Caco-2 (cell line): ENCODE measurements at regions of chr11 and their contacts with region 1.

Region 1: DNA sequence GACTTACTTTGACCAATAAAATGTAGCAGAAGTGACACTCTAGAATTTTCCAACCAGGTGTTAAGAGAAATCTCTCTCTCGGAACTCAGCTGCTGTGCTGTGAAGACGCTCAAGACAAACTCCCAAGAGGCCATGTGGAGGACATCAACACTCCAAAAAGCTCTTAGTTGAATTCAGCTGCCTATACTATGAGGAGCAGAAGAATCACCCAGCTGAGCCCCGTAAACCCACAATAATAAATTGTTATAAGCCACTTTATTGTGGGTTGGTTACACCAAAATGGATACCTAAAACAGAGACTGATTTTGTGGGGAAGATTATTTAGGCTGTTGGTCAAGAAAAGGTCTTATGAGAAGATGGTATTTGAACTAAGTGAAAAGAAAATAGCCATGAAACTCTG is 44.1 kb upstream of the FSHB start:
- DNase-seq: no peak
- H3K4me3 ChIP-seq: no peak overlapping the region
- H3K4me3 Mint-ChIP-seq: no peak overlapping the region
- H3K27ac Mint-ChIP-seq: no peak overlapping the region
- H3K4me1 ChIP-seq: peaks cover 9% of the 10 kb centered on the region; the same call in 1 of the 2 replicates
- H3K4me1 Mint-ChIP-seq: no peaks in the 10 kb centered on the region
- H3K27me3 ChIP-seq: no peaks in the 10 kb centered on the region
- H3K27me3 Mint-ChIP-seq: no peaks in the 10 kb centered on the region
- CTCF ChIP-seq: no peak

Region 2: DNA sequence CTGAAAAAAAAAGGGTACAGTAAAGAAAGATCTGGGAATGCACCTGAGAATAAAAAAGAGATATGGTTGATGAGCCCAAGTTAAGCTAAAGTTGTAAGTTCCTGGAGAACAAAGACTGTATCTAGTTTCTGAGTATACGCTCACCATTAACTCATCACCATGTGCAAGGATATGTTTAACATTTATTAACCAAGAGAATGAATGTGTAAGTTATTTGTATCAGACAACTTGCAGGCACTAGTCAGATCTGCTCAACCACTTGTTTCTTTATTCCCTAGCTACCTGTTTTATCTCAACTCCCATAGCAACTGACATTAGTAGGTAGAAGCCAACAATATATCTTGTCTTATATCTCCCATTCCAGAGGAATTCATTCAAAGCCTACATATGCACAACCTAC is 95.0 kb before region 1 on chr11:
- CTCF ChIA-PET with region 1: no interaction called
- POLR2A ChIA-PET with region 1: no interaction called
- intact Hi-C with region 1: no loop called
- DNase-seq: no peak
- H3K4me3 ChIP-seq: no peak overlapping the region
- H3K4me3 Mint-ChIP-seq: no peak overlapping the region
- H3K27ac Mint-ChIP-seq: no peak overlapping the region
- H3K4me1 ChIP-seq: no peaks in the 10 kb centered on the region
- H3K4me1 Mint-ChIP-seq: no peaks in the 10 kb centered on the region
- H3K27me3 ChIP-seq: no peaks in the 10 kb centered on the region
- H3K27me3 Mint-ChIP-seq: peaks cover 4% of the 10 kb centered on the region
- CTCF ChIP-seq: no peak

Region 3: DNA sequence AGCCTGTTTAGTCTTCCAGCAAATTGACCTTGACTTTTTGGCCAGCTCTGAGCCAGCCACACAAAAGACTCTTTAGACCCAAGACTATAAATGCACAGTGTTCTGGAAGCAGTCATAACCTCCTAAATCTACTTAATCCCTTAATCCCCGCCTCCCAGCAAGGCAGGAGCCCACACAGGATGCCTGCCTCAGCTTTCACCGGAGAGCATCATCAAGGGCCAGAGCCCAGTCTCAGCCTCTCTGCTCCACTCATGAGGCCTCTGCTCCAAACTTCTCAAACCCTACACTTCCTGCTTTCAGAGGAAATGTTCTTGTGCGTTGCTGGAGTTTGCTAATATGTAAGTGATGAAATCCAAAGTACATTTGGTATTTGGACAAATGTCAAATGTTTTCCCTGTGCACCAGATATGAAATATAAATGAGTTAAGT is 13.9 kb before region 1 on chr11:
- CTCF ChIA-PET with region 1: no interaction called
- POLR2A ChIA-PET with region 1: no interaction called
- intact Hi-C with region 1: loop called (anchors 1 kb)
- DNase-seq: no peak
- H3K4me3 ChIP-seq: no peak overlapping the region
- H3K4me3 Mint-ChIP-seq: no peak overlapping the region
- H3K27ac Mint-ChIP-seq: no peak overlapping the region
- H3K4me1 ChIP-seq: peaks cover 22% of the 10 kb centered on the region
- H3K4me1 Mint-ChIP-seq: no peaks in the 10 kb centered on the region
- H3K27me3 ChIP-seq: no peaks in the 10 kb centered on the region
- H3K27me3 Mint-ChIP-seq: no peaks in the 10 kb centered on the region
- CTCF ChIP-seq: no peak

Region 4: DNA sequence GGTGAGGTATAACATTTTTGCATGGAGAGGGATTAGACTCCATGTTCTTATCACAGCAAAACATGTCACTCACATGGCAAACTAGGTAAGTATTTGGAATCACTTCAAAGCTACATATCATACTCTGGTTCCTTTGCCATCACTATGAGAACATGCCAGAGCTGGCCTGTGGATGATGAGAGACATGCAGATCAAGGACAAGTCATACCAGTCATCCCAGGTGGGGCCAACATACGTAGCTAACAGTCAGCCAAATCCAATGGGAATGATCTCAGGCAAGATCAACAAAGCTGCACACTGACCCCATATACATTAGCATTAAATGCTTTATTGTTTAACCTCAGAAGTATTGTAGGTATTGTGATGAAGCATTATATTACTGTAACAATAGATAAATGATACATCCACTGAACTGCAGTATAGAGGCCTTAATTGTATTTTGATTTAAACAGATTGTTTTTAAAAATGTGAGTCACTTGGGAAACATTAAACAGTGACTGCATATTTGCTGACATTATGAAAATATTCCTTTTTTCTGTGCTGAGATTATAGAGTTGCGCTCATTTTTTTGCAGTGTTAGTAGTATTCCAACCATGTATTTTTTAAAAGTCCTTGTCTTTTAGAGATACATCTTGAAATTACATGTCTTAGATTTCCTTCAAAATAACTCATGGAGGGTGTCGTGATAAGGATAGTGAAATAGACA is 98.8 kb after region 1 on chr11:
- CTCF ChIA-PET with region 1: no interaction called
- POLR2A ChIA-PET with region 1: no interaction called
- intact Hi-C with region 1: no loop called
- DNase-seq: no peak
- H3K4me3 ChIP-seq: no peak overlapping the region
- H3K4me3 Mint-ChIP-seq: no peak overlapping the region
- H3K27ac Mint-ChIP-seq: no peak overlapping the region
- H3K4me1 ChIP-seq: no peaks in the 10 kb centered on the region
- H3K4me1 Mint-ChIP-seq: no peaks in the 10 kb centered on the region
- H3K27me3 ChIP-seq: no peaks in the 10 kb centered on the region
- H3K27me3 Mint-ChIP-seq: peaks cover 6% of the 10 kb centered on the region
- CTCF ChIP-seq: no peak

Region 5: DNA sequence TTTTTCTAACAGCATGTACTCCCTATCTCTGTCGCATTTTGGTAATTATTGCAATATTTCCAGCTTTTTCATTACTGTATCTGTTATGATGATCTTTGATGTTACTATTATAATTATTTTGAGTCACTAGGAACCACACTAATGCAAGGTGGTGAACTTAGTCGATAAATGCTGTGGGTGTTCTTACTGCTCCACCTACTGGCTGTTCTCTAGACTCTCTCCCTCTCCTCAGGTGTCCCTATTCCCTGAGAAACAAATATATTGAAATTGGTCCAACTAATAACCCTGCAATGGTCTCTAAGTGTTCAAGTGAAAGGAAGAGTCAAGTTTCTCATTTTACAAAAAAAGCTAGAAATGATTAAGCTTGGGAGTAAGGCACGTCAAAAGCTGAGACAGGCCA is 146.7 kb after region 1 on chr11:
- CTCF ChIA-PET with region 1: no interaction called
- POLR2A ChIA-PET with region 1: no interaction called
- intact Hi-C with region 1: no loop called
- DNase-seq: peak in 1 of 2 experiments; percentile 25
- H3K4me3 ChIP-seq: no peak overlapping the region
- H3K4me3 Mint-ChIP-seq: no peak overlapping the region
- H3K27ac Mint-ChIP-seq: no peak overlapping the region
- H3K4me1 ChIP-seq: no peaks in the 10 kb centered on the region
- H3K4me1 Mint-ChIP-seq: no peaks in the 10 kb centered on the region
- H3K27me3 ChIP-seq: no peaks in the 10 kb centered on the region
- H3K27me3 Mint-ChIP-seq: no peaks in the 10 kb centered on the region
- CTCF ChIP-seq: peak; percentile 38 to 70

Region 6: GRCh38 chr11:30445056-30445455 is 258.3 kb after region 1 on chr11:
- CTCF ChIA-PET with region 1: no interaction called
- POLR2A ChIA-PET with region 1: no interaction called
- intact Hi-C with region 1: no loop called
- DNase-seq: peak in 1 of 2 experiments; percentile 2
- H3K4me3 ChIP-seq: no peak overlapping the region
- H3K4me3 Mint-ChIP-seq: no peak overlapping the region
- H3K27ac Mint-ChIP-seq: no peak overlapping the region
- H3K4me1 ChIP-seq: no peaks in the 10 kb centered on the region
- H3K4me1 Mint-ChIP-seq: no peaks in the 10 kb centered on the region
- H3K27me3 ChIP-seq: no peaks in the 10 kb centered on the region; the same call in 1 of the 2 replicates
- H3K27me3 Mint-ChIP-seq: peaks cover 13% of the 10 kb centered on the region
- CTCF ChIP-seq: peak in 1 of 2 experiments; percentile 20